Esophagus muscularis mucosa (tissue), 4 donors: ENCODE measurements at regions of chr6 and their contacts with region 1.

Region 1: GRCh38 chr6:144013486-144013909 is 5.4 kb upstream of the PLAGL1 start:
- DNase-seq: no peak
- H3K4me3 ChIP-seq: no peak overlapping the region
- H3K27ac ChIP-seq: no peak overlapping the region
- H3K4me1 ChIP-seq: peaks cover 0 to 4% (median 2%) of the 10 kb centered on the region in 4 donors
- H3K27me3 ChIP-seq: peaks cover 0 to 4% (median 0%) of the 10 kb centered on the region in 4 donors
- CTCF ChIP-seq: peak; percentile 82 to 94 (median 91)
- EP300 ChIP-seq: no peak
- POLR2A ChIP-seq: no peak

Region 2: GRCh38 chr6:143575440-143575839 is 438.1 kb before region 1 on chr6:
- intact Hi-C with region 1: loop called (anchors 1 kb)
- DNase-seq: no peak
- H3K4me3 ChIP-seq: no peak overlapping the region
- H3K27ac ChIP-seq: no peak overlapping the region
- H3K4me1 ChIP-seq: peaks cover 0 to 8% (median 2%) of the 10 kb centered on the region in 4 donors
- H3K27me3 ChIP-seq: no peaks in the 10 kb centered on the region
- CTCF ChIP-seq: peak; percentile 92 to 97 (median 92)
- EP300 ChIP-seq: no peak
- POLR2A ChIP-seq: no peak

Region 3: GRCh38 chr6:143842902-143843676 is 170.4 kb before region 1 on chr6 and contains the start of gene LTV1:
- intact Hi-C with region 1: loop called (anchors 5 kb)
- DNase-seq: peak; percentile 99
- H3K4me3 ChIP-seq: peak within 1 kb of the TSS; percentile 73 to 86 (median 78)
- H3K27ac ChIP-seq: peak within 1 kb of the TSS; percentile 92 to 96 (median 95)
- H3K4me1 ChIP-seq: peaks cover 11 to 31% (median 22%) of the 10 kb centered on the region in 4 donors
- H3K27me3 ChIP-seq: no peaks in the 10 kb centered on the region
- CTCF ChIP-seq: peak in 1 of 3 experiments; percentile 17
- EP300 ChIP-seq: no peak
- POLR2A ChIP-seq: peak; percentile 18
- total RNA-seq, gene LTV1: 15.0 to 20.0 (median 18.0) TPM

Region 4: DNA sequence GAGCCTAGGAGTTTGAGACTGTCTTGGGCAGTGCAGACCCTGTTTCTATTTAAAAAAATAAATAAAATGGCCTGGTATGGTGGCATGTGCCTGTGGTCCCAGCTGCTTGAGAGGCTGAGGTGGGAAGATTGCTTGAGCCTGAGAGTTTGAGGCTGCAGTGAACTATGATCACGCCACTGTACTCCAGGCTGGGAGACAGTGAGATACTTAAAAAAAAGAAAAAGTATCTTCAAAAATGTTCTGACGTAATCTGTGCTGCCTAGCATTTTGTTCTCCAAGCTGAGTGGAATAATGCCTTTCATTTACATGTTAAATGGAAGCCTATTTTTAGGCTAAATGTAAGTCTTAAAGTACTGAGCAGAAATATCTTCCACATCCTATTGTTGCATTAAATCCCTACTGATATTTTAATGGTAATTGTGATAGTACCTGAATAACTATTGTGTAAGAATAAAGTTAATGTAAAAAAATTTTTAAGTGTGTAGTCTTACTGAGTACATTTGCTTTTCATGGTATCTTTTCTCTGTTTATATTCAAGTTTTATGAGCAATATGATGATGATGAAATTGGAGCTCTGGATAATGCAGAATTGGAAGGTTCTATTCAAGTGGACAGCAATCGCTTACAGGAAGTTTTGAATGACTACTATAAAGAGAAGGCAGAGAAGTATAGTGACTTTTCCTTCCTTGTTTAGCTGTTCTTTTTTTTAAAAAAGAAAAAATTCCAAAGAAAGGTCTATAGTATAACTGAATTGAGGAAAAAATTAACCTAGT is 153.4 kb before region 1 on chr6:
- intact Hi-C with region 1: no loop called
- DNase-seq: no peak
- H3K4me3 ChIP-seq: no peak overlapping the region
- H3K27ac ChIP-seq: no peak overlapping the region
- H3K4me1 ChIP-seq: no peaks in the 10 kb centered on the region
- H3K27me3 ChIP-seq: no peaks in the 10 kb centered on the region
- CTCF ChIP-seq: no peak
- EP300 ChIP-seq: no peak
- POLR2A ChIP-seq: no peak